ENCODE measurements at regions of chr11 and their contacts with region 1.

Region 1: GRCh38 chr11:62841361-62842184 is 2.2 kb upstream of the WDR74 start:
- DNase-seq: peak; percentile 97
- H3K4me3 ChIP-seq: peak overlapping the region; percentile 94
- H3K27ac ChIP-seq: peak overlapping the region; percentile 90
- H3K4me1 ChIP-seq: peaks cover 29% of the 10 kb centered on the region
- CTCF ChIP-seq: no peak

Region 2: DNA sequence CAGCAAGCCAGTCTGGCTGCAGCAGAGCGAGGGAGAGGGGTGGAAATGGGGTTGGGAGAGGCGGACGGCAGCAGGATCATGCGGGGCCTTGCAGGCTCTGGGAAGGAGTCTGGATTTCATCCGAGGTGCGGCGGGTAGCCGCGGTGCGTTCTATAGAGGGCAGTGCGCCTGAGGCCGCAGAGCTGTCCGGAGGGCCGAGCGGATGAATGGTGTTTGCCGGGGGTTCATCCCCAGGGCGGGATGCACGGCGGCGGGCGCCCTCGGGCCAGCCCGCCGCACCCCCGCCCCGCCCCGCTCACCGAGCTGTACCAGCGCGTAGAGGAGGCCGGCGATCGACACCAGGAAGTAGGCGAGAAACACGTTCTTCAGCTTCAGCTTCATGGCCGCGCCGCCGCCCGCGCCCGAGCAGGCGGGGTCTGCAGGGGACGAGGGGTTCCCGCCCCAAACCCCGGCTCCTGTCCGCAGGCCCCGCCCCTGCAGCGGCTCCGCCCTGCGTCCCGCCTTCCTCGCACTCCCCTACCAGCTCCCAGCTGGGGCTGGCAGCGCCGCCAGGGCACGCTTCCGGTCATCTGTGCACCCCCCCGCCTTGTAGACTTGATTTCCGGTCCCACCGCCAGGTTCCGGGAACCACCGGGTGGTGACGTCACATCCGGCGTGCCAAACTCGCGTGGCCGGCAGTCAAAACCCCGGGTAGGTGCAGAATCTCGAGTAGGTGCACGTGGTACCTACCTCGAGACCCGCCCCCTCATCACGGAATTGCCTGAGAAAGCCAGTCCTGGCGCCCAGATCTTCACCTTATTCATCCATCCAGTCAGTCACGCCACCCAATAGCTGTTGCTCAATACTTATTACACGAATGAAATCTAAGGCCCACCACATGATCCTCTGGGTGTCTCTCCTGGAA is 219.8 kb before region 1 on chr11 and contains the start of gene B3GAT3:
- CTCF ChIA-PET with region 1: no interaction called
- POLR2A ChIA-PET with region 1: no interaction called
- intact Hi-C with region 1: no loop called
- DNase-seq: peak; percentile 99
- H3K4me3 ChIP-seq: peak within 1 kb of the TSS; percentile 79
- H3K27ac ChIP-seq: peak within 1 kb of the TSS; percentile 83
- H3K4me1 ChIP-seq: peaks cover 25% of the 10 kb centered on the region
- CTCF ChIP-seq: 0 out of 2 replicates have a peak, but pooled peaks have one; percentile 20
- total RNA-seq, gene B3GAT3: 55.8 and 74.3 TPM in 2 replicates

Region 3: DNA sequence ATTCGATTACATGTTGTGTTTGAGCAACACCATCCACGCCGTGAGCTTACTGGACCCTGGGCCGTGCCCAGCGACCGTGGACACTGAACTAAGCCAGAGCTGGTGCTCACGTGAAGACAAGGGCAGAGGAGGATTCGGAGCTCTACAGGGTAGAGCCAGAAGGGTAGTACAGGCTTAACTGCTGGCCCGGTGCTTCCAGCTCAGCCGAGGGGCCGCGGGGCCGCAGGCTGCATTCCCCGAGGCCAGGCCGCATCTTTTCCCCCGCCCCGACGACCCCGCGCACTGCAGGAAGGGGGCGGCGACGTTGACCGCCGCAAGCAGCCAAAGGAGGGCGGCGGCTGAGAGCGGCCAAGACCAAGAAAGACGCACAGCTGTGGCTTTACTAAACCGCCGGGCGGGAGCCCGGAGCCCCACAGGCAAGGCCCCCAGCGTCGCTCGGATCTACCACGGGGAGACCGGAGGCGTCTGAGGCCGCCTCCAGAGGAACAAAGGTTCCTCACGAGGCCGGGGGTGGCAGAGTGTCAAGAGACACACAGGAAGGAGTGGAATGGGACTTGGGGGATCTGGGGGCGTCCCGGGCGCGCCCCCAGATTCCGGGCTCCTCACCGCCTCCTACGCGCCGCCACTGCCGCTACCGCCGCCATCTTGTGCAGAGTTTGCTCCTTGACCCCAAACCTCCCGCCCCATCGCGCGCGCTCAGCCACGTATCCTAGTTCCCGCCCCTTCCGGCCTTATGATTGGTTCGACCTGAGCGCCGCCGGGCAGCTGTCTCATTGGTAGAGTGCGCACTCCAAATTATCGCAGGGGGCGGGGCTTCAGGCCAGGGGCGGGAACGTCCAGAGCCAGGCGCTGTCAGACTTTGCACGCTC is 195.4 kb before region 1 on chr11 and contains the start of gene GANAB:
- CTCF ChIA-PET with region 1: no interaction called
- POLR2A ChIA-PET with region 1: no interaction called
- intact Hi-C with region 1: loop called (anchors 1 kb)
- DNase-seq: peak; percentile 99
- H3K4me3 ChIP-seq: peak within 1 kb of the TSS; percentile 95
- H3K27ac ChIP-seq: peak within 1 kb of the TSS; percentile 76
- H3K4me1 ChIP-seq: peaks cover 20% of the 10 kb centered on the region
- CTCF ChIP-seq: no peak
- total RNA-seq, gene GANAB: 91.4 and 108 TPM in 2 replicates

Region 4: DNA sequence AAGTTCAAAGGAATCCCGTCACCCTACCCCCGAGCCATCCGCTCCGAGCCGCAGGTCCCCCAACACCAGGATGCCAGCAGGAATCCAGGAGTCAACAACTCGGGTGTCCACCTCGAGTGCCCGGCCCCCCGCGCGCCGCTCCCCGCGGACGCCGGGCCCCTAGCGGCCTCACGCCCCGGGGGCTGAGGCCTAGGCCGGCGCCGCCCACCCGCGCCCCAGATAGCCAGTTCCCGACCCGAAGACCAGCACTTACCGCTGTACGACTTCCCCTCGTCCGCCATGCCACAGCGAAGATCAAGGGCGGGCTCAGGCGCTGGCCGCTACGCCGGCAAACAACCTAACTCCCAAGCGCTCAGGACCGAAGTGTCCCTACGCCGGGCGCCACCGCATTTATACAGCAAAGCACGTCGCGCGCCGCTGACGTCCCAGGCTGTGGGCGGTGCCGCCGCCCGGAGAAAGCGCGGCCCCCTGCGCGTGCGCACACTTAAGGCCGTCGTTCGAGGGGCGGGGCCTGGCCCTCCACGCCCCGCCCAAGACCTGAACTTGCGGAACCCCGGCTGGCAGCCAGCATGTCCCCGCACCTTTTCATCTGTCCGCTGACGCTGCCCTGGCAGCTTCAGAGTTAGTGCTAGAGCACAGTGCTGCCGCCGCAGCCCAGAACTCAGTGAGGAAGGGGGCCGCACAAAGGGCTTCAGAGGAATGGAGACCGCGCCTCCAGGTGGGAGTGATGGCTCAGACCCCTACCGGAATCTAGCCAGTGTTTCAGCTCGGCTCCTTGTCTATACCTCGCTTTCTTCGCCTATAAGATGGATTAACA is 36.3 kb before region 1 on chr11 and contains the start of gene NXF1:
- CTCF ChIA-PET with region 1: no interaction called
- POLR2A ChIA-PET with region 1: interaction called, 5 read pairs
- intact Hi-C with region 1: loop called (anchors 2 kb)
- DNase-seq: peak; percentile 97
- H3K4me3 ChIP-seq: peak within 1 kb of the TSS; percentile 89
- H3K27ac ChIP-seq: peak within 1 kb of the TSS; percentile 77
- H3K4me1 ChIP-seq: peaks cover 31% of the 10 kb centered on the region
- CTCF ChIP-seq: 0 out of 2 replicates have a peak, but pooled peaks have one; percentile 27
- total RNA-seq, gene NXF1: 35.1 and 53.3 TPM in 2 replicates

Region 5: GRCh38 chr11:62860835-62861563 is 19.4 kb after region 1 on chr11:
- CTCF ChIA-PET with region 1: no interaction called
- POLR2A ChIA-PET with region 1: interaction called, 70 read pairs
- intact Hi-C with region 1: no loop called
- DNase-seq: no peak
- H3K4me3 ChIP-seq: peak overlapping the region; percentile 94
- H3K27ac ChIP-seq: peak overlapping the region; percentile 66
- H3K4me1 ChIP-seq: peaks cover 49% of the 10 kb centered on the region
- CTCF ChIP-seq: no peak

Region 6: GRCh38 chr11:62880803-62881578 is 39.4 kb after region 1 on chr11 and contains the start of gene SLC3A2:
- CTCF ChIA-PET with region 1: no interaction called
- POLR2A ChIA-PET with region 1: interaction called, 9 read pairs
- intact Hi-C with region 1: loop called (anchors 2 kb)
- DNase-seq: peak; percentile 89
- H3K4me3 ChIP-seq: peak within 1 kb of the TSS; percentile 73
- H3K27ac ChIP-seq: peak within 1 kb of the TSS; percentile 74
- H3K4me1 ChIP-seq: peaks cover 28% of the 10 kb centered on the region
- CTCF ChIP-seq: peak; percentile 78
- total RNA-seq, gene SLC3A2: 289 and 291 TPM in 2 replicates

Region 7: DNA sequence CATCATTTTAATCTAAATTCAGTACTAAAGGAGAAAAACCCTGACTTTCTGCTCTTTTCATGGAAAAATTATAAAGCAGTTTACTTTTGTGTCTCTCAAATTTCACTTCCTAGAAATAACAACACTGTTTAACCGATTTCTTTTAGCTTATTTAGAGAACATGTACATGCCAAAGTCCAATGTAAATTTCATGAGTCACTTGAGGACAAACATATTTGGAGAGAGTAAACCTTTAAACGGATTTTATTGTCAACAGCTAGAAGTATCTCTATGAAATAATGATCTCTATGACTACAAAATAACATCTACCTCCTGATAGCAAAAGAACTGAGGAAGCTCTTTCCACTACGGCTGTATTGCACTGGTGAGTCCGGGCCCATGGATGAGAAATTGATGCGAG is 448.1 kb after region 1 on chr11:
- CTCF ChIA-PET with region 1: no interaction called
- POLR2A ChIA-PET with region 1: no interaction called
- intact Hi-C with region 1: no loop called
- DNase-seq: no peak
- H3K4me3 ChIP-seq: no peak overlapping the region
- H3K27ac ChIP-seq: no peak overlapping the region
- H3K4me1 ChIP-seq: no peaks in the 10 kb centered on the region
- CTCF ChIP-seq: no peak